ENCODE measurements at regions of chr15 and their contacts with region 1.

Region 1: DNA sequence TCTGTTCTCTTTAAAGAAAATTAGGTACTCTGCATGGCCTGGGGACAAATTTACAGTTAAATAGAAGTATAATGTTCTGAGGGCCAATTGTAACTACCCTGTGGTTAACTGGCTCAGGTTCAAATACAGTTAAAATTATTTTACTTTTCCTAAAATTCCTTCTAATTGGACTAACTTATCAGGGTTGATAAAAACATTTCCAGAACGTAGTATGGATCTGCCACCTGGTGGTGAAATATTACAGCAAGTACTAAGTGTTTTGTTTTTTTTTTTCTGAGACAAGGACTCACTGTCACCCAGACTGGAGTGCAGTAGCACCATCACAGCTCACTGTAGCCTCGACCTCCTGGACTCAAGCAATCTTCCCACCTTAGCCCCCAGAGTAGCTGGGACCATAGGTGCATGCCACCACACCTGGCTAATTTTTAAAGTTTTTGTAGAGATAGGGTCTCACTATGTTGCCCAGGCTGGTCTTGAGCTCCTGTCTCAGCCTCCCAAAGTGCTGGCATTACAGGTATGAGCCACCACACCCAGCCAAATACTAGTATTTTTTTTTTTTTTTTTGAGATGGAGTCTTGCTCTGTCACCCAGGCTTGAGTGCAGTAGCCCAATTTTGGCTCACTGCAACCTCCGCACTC is 29.2 kb downstream of the NEO1 start:
- DNase-seq: peak in 1 of 10 donors; percentile 29

Region 2: DNA sequence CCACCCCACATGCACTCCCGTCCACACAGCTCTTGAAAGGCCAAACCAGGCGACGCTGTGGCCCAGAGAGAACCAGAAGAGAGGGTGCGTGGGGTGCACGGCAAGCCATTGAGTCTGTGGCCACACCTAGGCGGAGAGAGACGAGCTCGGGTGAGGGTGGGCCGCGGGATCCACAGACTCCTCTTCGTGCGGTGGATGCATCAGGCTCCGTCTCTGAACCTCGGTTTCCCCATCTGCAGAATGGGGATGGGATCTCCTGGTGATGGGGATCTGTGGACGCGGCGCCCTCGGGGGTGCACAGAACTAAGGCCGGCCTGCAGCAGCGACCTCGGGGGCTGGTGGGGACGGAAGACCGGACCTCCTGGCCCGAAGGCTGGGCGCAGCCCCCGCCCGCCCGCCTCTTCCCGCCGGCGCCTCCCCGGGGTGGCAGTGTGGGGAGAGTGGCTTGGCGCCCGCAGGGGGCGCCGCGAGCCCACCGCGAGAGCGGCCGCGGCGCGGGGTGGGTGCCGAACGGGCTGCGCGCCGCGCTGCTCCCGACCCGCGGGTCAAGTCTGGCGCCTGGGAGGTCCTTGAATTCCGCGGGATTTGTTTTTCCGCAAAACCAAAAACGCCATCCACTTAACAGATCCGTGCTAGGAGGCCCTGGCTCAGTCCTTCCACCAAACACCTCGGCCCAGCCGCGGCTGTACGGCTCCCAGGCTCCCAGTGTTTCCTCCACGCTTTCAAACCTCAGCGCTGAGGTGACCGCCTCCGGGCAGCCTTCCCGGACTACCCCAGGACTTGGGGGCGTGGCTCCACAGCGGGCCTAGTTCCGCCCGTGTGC is 284.7 kb before region 1 on chr15:
- intact Hi-C with region 1: loop called (anchors 5 kb)
- DNase-seq: peak in 8 of 10 donors; percentile 25 to 88 (median 49)

Region 3: DNA sequence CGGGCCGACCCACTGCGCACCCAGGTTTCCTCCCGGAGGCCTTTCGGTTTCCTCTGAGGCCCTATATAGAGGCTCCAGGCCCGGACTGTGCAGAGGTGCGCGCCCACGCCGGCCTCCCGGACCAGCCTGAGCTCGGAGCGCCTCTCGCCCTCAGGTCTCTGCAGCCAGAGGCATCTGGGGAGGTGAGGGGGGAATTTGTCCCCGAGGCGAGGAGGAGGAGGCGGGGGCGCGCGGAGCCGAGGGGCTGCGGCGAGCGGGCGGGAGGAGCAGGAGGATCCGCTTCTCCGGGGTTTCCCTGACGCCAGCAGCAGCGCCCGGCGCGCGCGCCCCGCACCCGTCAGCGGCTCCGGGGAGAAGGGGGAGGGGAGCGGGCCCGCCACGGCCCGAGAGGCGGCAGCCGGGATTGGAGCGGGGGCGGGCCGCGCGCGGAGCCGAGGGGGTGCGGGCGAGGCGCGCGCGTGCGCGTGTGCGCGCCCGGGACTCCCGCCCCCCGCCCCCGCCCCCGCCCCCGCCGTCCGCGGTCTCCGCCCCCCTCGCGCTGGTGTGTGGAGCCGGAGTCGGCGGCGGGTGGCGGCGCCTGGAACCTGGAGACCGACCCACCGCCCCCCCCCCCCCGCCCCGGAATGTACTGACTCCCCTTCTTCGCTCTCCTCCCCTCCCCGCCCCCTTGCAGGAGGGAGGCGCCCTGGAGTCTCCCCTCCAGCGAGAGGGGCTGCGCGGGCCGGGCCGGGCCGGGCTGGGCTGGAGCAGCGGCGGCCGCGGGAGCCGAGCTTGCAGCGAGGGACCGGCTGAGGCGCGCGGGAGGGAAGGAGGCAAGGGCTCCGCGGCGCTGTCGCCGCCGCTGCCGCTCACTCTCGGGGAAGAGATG is 29.4 kb before region 1 on chr15 and contains the start of gene NEO1:
- intact Hi-C with region 1: loop called (anchors 2 kb)
- DNase-seq: peak; percentile 84 to 99 (median 88)

Measured in posterior cingulate gyrus (tissue), 11 donors.